ENCODE measurements at regions of chr22 and their contacts with region 1.

Region 1: DNA sequence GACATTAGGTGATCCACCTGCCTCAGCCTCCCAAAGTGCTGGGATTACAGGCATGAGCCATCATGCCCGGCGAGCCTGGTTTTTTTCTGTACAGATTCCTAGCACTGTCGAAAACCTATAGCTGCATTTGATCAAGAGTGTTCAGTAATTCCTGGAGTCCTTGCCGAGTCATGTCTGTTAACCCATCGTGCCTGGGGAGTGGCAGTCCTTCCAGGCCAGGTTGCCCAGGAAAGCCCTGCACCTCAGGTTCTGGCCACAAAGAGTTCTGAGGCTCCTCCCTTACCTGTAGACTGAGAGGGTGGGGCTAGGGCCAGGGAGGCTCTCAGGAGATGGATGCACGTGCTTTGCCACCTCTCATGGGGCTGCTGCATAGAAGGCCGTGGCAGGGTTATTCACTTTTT is 17.0 kb downstream of the YDJC start:
- DNase-seq: peak; percentile 32
- ATAC-seq: peak; percentile 87
- H3K4me3 Mint-ChIP-seq: no peak overlapping the region
- H3K27ac Mint-ChIP-seq: no peak overlapping the region
- H3K4me1 Mint-ChIP-seq: no peaks in the 10 kb centered on the region
- H3K27me3 Mint-ChIP-seq: no peaks in the 10 kb centered on the region
- CTCF ChIP-seq: no peak

Region 2: DNA sequence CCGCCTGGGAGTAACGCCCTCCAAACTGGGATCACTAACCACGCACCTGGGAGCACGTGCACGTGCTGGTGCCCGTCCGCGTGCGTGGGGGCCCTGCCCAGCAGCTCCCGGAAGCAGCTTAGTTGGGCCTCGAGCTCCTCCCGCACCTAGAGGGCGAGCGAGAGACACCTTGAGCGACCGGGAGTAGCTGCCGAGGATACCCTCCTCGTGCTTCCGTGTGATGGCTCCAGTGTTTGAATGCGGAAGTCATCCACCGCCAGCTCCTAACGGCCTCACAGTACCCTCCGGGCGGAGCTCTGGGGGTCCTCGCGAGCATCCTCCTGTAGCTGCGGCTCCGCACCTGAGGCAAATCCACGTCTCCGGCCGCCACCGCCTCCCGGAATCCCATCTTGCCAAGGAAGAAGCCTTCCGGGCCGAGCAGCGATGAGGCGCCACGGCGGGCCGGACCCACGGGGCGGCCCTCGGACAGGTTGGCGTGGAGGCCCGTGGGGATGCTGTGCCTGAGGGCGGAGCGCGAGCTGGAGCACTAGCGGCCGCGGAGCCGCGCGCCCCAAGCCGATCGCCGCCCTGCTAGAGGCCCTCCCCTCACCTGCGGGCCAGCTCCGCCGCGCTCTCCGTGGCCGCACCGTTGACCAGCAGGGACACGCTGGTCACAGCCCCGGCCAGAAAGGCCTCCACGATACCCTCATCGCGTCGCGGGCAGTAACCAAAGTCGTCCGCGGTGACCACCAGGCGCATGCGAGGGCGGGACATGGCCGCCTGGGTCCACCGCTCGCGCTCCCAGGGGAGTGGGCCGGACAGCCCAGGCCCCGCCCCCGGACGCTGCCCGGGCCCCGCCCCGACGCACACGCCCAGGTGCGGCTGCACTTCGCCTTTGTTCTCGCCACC is 16.6 kb after region 1 on chr22 and contains the start of gene YDJC:
- CTCF ChIA-PET with region 1: interaction called, 20 read pairs
- POLR2A ChIA-PET with region 1: no interaction called
- DNase-seq: peak; percentile 97
- ATAC-seq: peak; percentile 78
- H3K4me3 Mint-ChIP-seq: peak within 1 kb of the TSS; percentile 80
- H3K27ac Mint-ChIP-seq: 0 out of 2 replicates have a peak within 1 kb of the TSS, but pooled peaks have one; percentile 19
- H3K4me1 Mint-ChIP-seq: peaks cover 19% of the 10 kb centered on the region
- H3K27me3 Mint-ChIP-seq: peaks cover 11% of the 10 kb centered on the region
- CTCF ChIP-seq: no peak; the same call in 1 of the 2 replicates
- total RNA-seq, gene YDJC: 39.1 to 42.1 TPM (median 39.8 TPM) in 3 replicates

Region 3: GRCh38 chr22:21666786-21667185 is 53.9 kb after region 1 on chr22:
- CTCF ChIA-PET with region 1: no interaction called
- POLR2A ChIA-PET with region 1: no interaction called
- DNase-seq: no peak
- ATAC-seq: no peak
- H3K4me3 Mint-ChIP-seq: peak overlapping the region; percentile 97
- H3K27ac Mint-ChIP-seq: peak overlapping the region; percentile 95
- H3K4me1 Mint-ChIP-seq: peaks cover 14% of the 10 kb centered on the region
- H3K27me3 Mint-ChIP-seq: peaks cover 3% of the 10 kb centered on the region
- CTCF ChIP-seq: no peak